Transverse colon (tissue), 4 donors: ENCODE measurements at regions of chr1 and their contacts with region 1.

Region 1: DNA sequence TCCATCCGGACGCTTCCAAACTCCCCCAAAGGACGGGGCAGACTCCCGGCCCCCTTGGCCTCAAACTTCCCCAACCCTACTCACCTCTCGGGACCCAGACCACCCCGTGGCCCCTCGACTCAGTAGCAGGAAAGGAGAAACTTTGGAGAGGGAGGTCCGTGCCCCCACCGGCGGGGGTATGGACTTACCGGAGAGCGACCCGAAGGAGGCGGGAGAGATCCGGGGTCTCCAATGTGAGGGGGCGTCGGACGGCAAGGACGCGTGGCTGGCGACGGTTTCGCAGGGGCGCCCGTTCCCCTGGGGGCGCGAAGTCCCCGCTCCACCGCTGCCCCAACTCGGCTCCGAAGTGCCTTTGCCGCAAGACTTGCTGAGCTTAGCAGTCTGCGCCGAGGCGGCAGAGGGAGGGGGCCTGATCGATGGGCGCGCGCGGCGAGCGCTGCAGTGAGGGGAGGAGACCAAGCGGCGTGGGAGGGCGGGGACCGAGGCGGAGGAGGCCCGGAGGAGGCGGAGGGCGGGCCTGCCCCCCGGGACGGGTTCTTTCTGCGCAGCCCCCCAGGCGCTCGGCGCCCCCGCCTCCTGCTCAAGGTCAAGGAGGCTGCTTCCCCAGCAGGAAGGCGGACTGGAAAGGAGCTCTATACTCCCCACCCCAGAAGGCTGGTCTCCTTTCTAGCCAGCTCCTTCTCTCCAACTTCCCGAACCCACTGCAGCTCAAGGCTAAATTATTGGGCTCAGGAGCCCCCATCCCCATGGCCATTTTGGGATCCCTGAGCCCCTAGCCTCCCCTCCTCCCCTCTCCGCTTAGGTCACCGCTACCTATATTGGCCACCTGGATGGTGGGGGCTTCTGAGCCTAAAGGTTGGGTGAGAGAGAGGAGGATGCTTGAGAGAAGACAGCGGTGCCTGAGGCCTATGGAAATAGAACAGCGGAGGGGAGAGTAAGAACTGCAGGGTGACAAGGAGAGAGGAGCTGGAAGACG is at the start of gene SYT2:
- DNase-seq: peak; percentile 16
- H3K4me3 ChIP-seq: peak within 1 kb of the TSS in 2 of 4 donors; percentile 21 to 50
- H3K27ac ChIP-seq: no peak within 1 kb of the TSS
- H3K4me1 ChIP-seq: peaks cover 11 to 18% (median 14%) of the 10 kb centered on the region in 4 donors
- H3K27me3 ChIP-seq: peaks cover 61% of the 10 kb centered on the region
- CTCF ChIP-seq: no peak
- EP300 ChIP-seq: no peak
- POLR2A ChIP-seq: no peak
- total RNA-seq, gene SYT2: 0.16 to 0.40 TPM in 2 of 4 donors, not detected in the others

Region 2: GRCh38 chr1:202184750-202185460 is 525.5 kb before region 1 on chr1:
- in situ Hi-C with region 1: loop called (anchors 10 to 25 kb)
- intact Hi-C with region 1: loop called (anchors 5 kb)
- DNase-seq: peak; percentile 86
- H3K4me3 ChIP-seq: no peak overlapping the region
- H3K27ac ChIP-seq: no peak overlapping the region
- H3K4me1 ChIP-seq: peaks cover 0 to 3% (median 0%) of the 10 kb centered on the region in 4 donors
- H3K27me3 ChIP-seq: no peaks in the 10 kb centered on the region
- CTCF ChIP-seq: peak; percentile 63 to 88 (median 83)
- EP300 ChIP-seq: no peak
- POLR2A ChIP-seq: no peak

Region 3: DNA sequence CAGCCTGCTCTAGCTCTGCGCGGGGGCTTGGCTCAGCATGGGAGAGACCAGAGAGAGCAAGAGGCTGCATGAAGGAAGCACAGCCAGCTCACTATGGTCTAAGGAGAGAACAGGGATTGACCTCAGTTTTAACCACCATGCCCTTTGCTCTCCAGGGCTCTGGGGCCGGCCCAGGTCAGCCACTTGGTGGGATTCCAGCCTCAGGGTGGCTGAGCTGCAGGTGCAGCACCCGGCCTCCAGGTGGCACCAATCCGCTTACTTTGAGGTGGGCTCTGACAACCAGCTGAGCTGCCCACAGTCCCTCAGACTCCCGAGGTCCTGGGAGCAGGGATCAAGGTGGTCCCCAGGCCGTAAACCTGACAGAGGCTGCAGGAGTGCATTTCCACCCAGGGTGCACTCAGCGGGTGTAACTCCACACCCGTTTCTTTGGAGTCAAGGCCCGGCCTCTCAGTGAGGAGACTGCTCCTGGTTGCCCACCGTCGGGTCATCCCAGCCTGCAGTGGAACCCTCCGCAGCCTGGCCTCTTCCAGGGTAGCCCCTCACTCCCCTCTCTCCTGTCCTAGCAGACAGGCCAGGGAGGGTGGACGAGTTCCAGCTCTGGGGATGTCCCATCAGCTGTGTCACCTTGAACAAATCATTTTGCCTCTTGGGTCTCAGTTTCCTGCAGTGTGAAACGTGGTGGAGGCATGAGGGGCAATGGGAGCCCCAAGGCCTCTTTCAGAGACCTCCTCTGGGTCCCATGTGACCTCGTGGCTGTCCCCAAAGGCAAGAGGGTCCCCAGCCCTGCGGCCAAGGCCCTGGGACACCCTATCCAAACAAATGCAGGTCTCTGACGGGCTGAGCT is 517.4 kb before region 1 on chr1:
- in situ Hi-C with region 1: loop called (anchors 10 to 25 kb)
- intact Hi-C with region 1: loop called (anchors 5 kb)
- DNase-seq: peak; percentile 64
- H3K4me3 ChIP-seq: peak overlapping the region in 2 of 4 donors; percentile 28 to 45
- H3K27ac ChIP-seq: no peak overlapping the region
- H3K4me1 ChIP-seq: peaks cover 0 to 20% (median 10%) of the 10 kb centered on the region in 4 donors
- H3K27me3 ChIP-seq: peaks cover 31% of the 10 kb centered on the region
- CTCF ChIP-seq: peak; percentile 80 to 90 (median 82)
- EP300 ChIP-seq: no peak
- POLR2A ChIP-seq: no peak

Region 4: DNA sequence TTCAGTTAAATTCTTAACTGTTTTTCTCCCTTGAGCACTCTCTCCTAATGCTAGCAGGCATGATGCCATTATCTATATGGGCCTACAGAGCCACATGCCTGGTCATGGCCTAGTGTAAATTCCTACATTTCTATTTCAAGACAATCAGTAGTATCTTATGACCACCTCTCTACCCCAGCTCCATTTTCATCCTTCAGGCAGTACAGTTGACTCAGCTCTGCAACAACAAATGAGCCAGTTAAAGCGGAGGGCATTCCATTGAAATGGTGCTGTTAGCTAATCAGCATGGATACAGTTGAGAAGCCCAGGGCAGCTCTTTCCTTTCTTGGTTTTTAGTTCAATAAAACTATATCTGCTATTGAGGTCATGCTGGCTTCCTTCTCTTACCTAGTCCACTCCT is 211.8 kb before region 1 on chr1:
- in situ Hi-C with region 1: loop called in 1 of 4 experiments (anchors 25 kb)
- intact Hi-C with region 1: no loop called
- DNase-seq: no peak
- H3K4me3 ChIP-seq: no peak overlapping the region
- H3K27ac ChIP-seq: no peak overlapping the region
- H3K4me1 ChIP-seq: no peaks in the 10 kb centered on the region
- H3K27me3 ChIP-seq: no peaks in the 10 kb centered on the region
- CTCF ChIP-seq: no peak
- EP300 ChIP-seq: no peak
- POLR2A ChIP-seq: no peak